ENCODE measurements at regions of chr12 and their contacts with region 1.

Region 1: GRCh38 chr12:9707864-9708808 is 24.8 kb downstream of the CLECL1 start:
- DNase-seq: peak; percentile 36
- H3K4me3 ChIP-seq: no peak overlapping the region
- H3K27ac ChIP-seq: no peak overlapping the region
- H3K27me3 ChIP-seq: no peaks in the 10 kb centered on the region
- CTCF ChIP-seq: peak; percentile 86

Region 2: GRCh38 chr12:9327320-9327719 is 380.8 kb before region 1 on chr12:
- in situ Hi-C with region 1: no loop called
- DNase-seq: no peak
- H3K4me3 ChIP-seq: no peak overlapping the region
- H3K27ac ChIP-seq: no peak overlapping the region
- H3K27me3 ChIP-seq: no peaks in the 10 kb centered on the region
- CTCF ChIP-seq: no peak

Region 3: DNA sequence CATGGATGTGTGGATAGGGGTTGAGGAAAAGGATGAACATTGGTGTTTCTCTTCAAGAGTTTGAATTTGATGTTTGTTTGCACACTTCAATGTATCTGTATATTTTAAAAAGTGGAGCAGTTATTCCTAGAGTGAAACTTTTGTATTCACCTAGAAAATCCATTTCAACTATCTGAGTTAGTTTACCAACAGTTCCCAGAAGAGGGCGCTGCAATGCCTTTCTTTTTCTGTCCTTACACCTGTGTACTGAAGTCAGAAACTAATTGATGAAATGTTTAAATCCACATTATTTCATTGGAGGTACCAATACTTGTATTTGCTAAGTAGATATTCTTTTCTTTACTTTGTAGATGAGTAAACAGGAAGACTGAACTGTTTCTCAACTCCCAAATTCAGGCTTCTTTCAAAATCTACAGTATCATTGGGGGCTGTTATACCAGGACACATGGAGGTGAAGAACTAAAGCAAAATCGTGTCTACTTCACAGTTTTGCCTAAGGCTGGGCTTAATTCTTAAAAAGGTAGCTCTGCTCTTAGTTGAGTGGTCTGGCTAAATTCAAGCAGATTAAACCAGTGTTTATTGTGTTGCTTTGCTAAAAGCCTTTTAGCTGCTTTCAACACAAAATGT is 73.8 kb before region 1 on chr12:
- in situ Hi-C with region 1: loop called (anchors 10 kb)
- DNase-seq: peak; percentile 60
- H3K4me3 ChIP-seq: no peak overlapping the region
- H3K27ac ChIP-seq: no peak overlapping the region
- H3K27me3 ChIP-seq: no peaks in the 10 kb centered on the region
- CTCF ChIP-seq: peak; percentile 67